Posterior cingulate gyrus (tissue), 11 donors: ENCODE measurements at regions of chr6 and their contacts with region 1.

Region 1: DNA sequence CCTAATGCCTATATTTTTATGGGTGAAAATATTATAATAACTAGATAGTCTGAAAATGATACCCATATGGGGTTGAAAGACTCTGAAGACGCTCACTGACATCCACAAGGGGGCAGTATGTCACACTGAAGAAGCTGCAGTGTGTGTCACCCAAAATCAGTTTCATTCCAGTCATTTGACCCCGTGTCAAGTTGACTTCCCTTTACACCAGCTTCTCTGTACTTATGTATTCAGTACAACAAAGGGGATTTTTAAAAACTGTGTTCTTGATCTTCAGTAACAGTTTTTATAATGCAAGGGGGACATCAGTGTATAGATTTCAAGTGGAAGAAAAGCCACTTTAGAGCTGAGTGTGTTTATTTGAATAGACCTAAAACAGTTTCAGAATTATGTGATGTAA is 19.3 kb downstream of the FAXC start:
- DNase-seq: peak in 4 of 10 donors; percentile 22 to 54 (median 26)

Region 2: DNA sequence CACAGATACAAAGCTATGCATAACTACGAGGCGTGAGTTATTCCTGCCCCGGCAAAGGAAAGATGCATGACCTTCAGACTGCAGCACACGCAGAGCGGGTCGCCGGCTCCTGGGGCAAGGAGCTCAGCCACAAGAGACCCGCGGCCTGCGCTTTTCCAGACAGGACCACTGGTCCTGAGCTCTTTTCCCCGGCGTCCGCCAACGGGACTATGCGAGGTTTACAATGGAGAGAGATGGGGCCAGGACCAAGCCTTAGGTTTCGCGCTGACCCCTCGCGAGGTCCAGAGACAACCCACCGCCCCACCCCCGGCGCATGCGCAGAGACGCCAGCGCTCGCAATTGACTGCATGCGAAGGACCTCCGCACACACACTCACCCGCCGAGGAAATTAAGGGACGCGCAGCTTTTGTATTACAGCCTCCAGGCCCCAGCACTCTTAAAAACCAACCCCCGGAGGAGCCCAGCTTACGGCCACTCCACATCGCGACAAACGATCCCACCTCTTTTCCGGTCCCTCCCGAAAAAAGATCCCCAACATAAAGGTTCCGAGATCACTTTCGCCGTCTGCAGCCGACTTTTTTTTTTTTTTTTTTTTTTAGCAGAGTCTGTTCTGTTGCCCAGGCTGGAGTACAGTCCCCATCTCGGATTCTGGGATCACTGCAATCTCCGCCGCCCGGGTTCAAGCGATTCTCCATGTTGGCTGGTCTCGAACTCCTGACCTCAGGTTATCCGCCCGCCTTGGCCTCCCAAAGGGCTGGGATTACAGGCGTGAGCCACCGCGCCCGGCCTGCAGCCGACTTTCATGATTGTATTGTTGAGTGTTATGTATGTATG is 63.8 kb after region 1 on chr6 and contains the start of gene COQ3:
- intact Hi-C with region 1: loop called (anchors 5 kb)
- DNase-seq: peak; percentile 64 to 94 (median 72)